H1 (cell line): ENCODE measurements at regions of chr10 and their contacts with region 1.

Region 1: GRCh38 chr10:103481974-103482531 is 3.0 kb upstream of the CALHM3 start:
- DNase-seq: no peak
- H3K4me3 ChIP-seq: no peak overlapping the region
- H3K27ac ChIP-seq: no peak overlapping the region
- H3K4me1 ChIP-seq: peaks cover 0 to 2% (median under 1%) of the 10 kb centered on the region in 4 experiments; a peak in 2 of 7 replicates
- H3K27me3 ChIP-seq: no peaks in the 10 kb centered on the region
- CTCF ChIP-seq: peak; percentile 26 to 63 (median 46); a peak in 3 of 4 replicates
- EP300 ChIP-seq: no peak
- POLR2A ChIP-seq: no peak
- RAD21 ChIP-seq: peak in 1 of 2 experiments; percentile 45; a peak in 2 of 4 replicates

Region 2: DNA sequence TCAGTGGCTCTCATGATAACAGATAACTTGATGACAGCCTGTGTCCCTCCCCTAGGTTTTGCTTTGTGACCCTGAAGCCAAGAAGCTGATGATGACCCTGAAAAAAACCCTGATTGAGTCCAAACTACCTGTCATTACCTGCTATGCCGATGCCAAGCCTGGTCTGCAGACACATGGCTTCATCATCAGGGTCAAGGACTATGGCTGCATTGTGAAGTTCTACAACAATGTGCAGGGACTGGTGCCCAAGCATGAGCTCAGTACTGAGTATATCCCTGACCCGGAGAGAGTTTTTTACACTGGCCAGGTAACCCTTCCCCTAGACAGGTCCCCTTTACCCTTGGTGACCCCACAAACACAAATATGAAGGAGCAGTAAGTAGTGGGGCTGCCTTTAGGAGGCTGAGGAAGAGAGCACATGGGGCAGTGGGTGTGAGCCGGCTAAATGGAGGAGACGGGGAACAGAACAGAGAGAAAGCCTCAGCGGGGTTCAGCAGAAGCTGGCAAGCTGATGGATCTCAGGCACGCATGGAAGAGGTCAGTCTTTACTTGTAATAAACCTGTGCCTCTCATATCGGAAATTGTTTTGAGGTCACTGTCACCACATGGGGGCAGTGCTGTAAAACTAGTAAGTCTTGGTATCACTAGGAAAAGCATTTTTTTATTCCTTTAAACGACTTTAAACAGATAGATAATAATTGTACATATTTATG is 65.5 kb before region 1 on chr10:
- CTCF ChIA-PET with region 1: interaction called, 35 read pairs
- POLR2A ChIA-PET with region 1: interaction called, 4 read pairs
- DNase-seq: no peak
- H3K4me3 ChIP-seq: no peak overlapping the region
- H3K27ac ChIP-seq: no peak overlapping the region
- H3K4me1 ChIP-seq: no peaks in the 10 kb centered on the region
- H3K27me3 ChIP-seq: no peaks in the 10 kb centered on the region
- CTCF ChIP-seq: peak in 2 of 3 experiments; percentile 27 to 44; a peak in 2 of 4 replicates
- EP300 ChIP-seq: no peak
- POLR2A ChIP-seq: no peak
- RAD21 ChIP-seq: peak; percentile 45 to 51

Region 3: GRCh38 chr10:103442031-103442461 is 40.0 kb before region 1 on chr10:
- CTCF ChIA-PET with region 1: interaction called, 30 read pairs
- POLR2A ChIA-PET with region 1: no interaction called
- DNase-seq: no peak
- H3K4me3 ChIP-seq: no peak overlapping the region
- H3K27ac ChIP-seq: no peak overlapping the region
- H3K4me1 ChIP-seq: no peaks in the 10 kb centered on the region
- H3K27me3 ChIP-seq: no peaks in the 10 kb centered on the region
- CTCF ChIP-seq: no peak
- EP300 ChIP-seq: no peak
- POLR2A ChIP-seq: no peak
- RAD21 ChIP-seq: no peak

Region 4: GRCh38 chr10:103451831-103452505 is 30.1 kb before region 1 on chr10 and contains the start of gene CALHM2:
- CTCF ChIA-PET with region 1: interaction called, 47 read pairs
- POLR2A ChIA-PET with region 1: interaction called, 12 read pairs
- DNase-seq: peak in 1 of 2 experiments; percentile 72
- H3K4me3 ChIP-seq: peak within 1 kb of the TSS; percentile 5 to 61 (median 44); a peak in 7 of 8 replicates
- H3K27ac ChIP-seq: no peak within 1 kb of the TSS
- H3K4me1 ChIP-seq: peaks cover 0 to 15% (median 4%) of the 10 kb centered on the region in 4 experiments; a peak in 5 of 7 replicates
- H3K27me3 ChIP-seq: no peaks in the 10 kb centered on the region; a peak in 2 of 7 replicates
- CTCF ChIP-seq: no peak
- EP300 ChIP-seq: no peak
- POLR2A ChIP-seq: no peak
- RAD21 ChIP-seq: 0 out of 4 replicates have a peak, but pooled peaks of 1 of the 2 experiments have one; percentile 7
- total RNA-seq, gene CALHM2: 1.2 and 1.9 TPM in 2 replicates

Region 5: DNA sequence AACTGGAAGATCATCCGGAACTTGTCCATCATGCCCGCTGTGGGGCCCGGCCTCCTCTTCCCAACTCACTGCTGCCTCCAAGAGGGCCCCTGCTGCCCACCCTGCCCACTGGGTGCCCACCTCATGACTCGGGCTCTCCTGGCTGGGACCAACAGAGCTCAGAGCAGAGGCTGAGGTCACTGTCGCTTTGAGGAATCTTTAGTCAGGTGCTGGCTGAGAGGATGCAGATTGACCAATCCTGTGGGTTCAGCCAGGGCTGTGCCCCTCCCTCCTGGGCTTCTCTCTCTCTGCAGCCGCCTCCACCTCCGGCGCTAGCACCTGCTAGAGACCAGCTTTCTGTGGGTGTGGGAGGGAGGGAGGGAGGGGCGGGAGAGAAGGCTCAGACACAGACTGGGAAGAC is 23.3 kb before region 1 on chr10 and contains the start of gene CALHM1:
- CTCF ChIA-PET with region 1: interaction called, 47 read pairs
- POLR2A ChIA-PET with region 1: interaction called, 3 read pairs
- DNase-seq: no peak
- H3K4me3 ChIP-seq: no peak within 1 kb of the TSS
- H3K27ac ChIP-seq: no peak within 1 kb of the TSS
- H3K4me1 ChIP-seq: peaks cover 0 to 8% (median 7%) of the 10 kb centered on the region in 4 experiments; a peak in 4 of 7 replicates
- H3K27me3 ChIP-seq: no peaks in the 10 kb centered on the region
- CTCF ChIP-seq: no peak
- EP300 ChIP-seq: no peak
- POLR2A ChIP-seq: no peak
- RAD21 ChIP-seq: no peak
- total RNA-seq, gene CALHM1: 0.34 TPM in 1 of 2 replicates, not detected in the other

Region 6: DNA sequence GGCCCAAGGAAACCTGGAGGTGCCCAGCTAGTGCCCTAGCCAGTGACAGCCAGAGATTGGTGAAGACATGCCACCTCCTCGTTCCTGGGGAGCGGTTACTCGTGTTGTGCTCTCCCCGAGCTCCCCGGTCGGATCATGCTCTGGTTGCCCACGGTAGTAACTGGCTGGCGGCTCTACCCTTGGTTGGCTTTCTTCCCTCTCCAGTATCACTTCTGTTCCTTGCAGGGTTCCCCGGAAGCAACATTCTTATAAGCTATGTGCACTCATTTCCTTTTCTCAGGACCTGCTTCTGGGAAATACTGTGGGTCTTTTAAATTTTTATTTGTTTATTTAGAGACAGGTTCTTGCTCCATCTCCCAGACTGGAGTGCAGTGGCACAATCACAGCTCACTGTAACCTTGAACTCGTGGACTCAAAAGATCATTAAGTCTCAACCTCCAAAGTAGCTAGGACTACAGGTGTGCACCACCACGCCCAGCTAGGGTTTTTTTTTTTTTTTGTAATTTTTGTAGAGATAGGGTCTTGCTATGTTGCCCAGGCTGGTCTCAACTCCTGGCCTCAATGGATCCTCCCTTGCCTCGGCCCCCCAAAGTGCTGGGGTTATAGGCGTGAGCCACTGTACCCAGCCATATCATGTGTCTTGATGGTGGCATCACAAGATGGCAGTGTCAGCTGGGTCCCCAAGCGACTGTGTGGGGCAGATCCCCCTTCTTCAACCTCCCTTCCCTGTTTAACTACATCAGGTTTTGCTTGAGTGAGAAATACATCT is 16.5 kb before region 1 on chr10:
- CTCF ChIA-PET with region 1: interaction called, 71 read pairs
- POLR2A ChIA-PET with region 1: no interaction called
- DNase-seq: no peak
- H3K4me3 ChIP-seq: no peak overlapping the region
- H3K27ac ChIP-seq: no peak overlapping the region
- H3K4me1 ChIP-seq: no peaks in the 10 kb centered on the region
- H3K27me3 ChIP-seq: no peaks in the 10 kb centered on the region
- CTCF ChIP-seq: no peak
- EP300 ChIP-seq: no peak
- POLR2A ChIP-seq: no peak
- RAD21 ChIP-seq: no peak

Region 7: DNA sequence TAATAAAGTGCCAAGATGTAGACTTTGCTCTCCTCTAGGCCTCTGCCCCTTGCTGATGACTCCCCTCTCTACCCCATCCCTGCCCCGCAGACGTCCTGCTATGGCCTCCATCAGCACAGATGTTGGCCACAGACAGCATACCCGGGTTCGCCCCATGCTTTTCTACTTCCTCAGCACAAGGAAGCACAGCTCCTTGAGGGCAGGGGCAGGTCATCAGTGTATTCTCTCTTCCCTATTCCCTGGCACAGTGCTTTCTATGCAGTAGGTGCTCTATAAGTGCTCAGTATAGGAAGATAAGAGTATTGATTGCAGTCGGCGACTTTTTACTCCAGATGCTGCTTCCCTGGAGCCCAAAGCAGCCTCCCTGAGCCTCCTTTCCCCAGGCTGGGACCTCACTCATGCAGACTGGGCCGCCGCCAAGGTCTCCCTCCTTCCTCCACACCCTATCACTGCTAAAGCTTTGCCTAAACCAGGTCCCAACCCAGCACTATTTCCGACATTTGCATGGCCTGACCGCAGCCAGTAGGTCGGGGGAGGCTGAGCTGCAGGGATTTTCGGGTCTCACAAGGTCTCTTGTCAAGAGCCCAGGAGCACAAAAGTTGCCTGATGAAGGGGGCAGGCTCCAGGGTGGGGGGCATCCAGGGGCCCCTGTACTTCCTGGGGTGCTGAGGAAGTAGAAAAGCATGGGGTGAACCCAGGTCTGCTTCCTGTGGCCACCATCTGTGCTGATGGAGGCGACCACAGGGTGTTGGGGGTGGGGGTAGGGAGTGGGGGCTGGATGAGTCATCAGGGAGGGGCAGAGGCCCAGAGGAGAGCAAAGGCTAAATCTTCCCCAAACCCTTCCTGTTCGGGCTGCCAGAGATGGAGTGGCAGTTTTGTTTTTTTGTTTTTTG is 11.0 kb before region 1 on chr10:
- CTCF ChIA-PET with region 1: interaction called, 71 read pairs
- POLR2A ChIA-PET with region 1: interaction called, 11 read pairs
- DNase-seq: no peak
- H3K4me3 ChIP-seq: no peak overlapping the region
- H3K27ac ChIP-seq: no peak overlapping the region
- H3K4me1 ChIP-seq: peaks cover 0 to 11% (median 2%) of the 10 kb centered on the region in 4 experiments; a peak in 2 of 7 replicates
- H3K27me3 ChIP-seq: no peaks in the 10 kb centered on the region
- CTCF ChIP-seq: no peak
- EP300 ChIP-seq: no peak
- POLR2A ChIP-seq: no peak
- RAD21 ChIP-seq: no peak